ENCODE measurements at regions of chr22 and their contacts with region 1.

Region 1: DNA sequence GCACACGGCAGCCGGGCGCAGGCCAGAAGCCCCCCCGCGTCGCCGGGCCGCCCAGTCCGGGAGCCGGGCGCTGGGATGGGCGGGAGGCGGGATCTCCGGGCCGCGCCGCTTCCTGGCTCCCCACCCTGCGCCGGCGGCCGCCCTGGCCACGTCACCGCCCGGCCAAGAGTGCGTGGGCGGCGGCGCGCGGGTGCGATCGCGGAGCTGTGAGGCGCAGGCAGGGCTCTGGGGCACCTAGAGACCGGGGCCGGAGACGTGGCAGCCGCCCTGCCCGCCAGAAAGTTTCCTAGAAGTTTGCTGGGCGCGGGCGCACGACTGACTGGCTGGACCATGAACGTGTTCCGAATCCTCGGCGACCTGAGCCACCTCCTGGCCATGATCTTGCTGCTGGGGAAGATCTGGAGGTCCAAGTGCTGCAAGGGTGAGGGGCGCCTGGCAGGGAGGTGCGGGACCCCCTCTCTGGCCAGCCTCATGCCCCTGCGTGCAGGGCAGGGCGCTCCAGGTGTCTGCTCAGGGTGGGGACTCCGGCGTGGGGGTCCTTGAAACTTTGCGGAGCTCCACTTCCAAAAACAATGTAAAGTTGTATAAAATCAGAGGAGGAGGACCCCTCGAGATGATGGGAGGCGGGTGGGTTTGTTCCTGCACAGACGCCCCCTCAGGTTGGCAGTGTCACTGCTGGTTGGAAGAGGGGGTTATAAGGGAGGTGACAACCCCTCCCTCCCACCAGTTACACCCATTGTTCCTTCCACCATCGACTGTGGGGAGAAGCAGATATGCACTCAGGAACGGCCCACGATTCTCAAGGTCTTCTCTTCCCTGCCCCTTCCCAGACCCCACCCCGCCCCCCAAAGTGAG is at the start of gene KDELR3:
- DNase-seq: peak; percentile 78
- ATAC-seq: peak; percentile 94
- H3K4me3 Mint-ChIP-seq: peak within 1 kb of the TSS; percentile 69
- H3K27ac Mint-ChIP-seq: peak within 1 kb of the TSS; percentile 30
- H3K4me1 Mint-ChIP-seq: peaks cover 4% of the 10 kb centered on the region
- H3K27me3 Mint-ChIP-seq: peaks cover 27% of the 10 kb centered on the region
- CTCF ChIP-seq: peak; percentile 18
- total RNA-seq, gene KDELR3: 1.7 to 2.1 TPM

Region 2: GRCh38 chr22:38353142-38353629 is 114.9 kb before region 1 on chr22:
- CTCF ChIA-PET with region 1: no interaction called
- POLR2A ChIA-PET with region 1: no interaction called
- intact Hi-C with region 1: no loop called
- DNase-seq: peak; percentile 67
- ATAC-seq: peak; percentile 96
- H3K4me3 Mint-ChIP-seq: no peak overlapping the region
- H3K27ac Mint-ChIP-seq: no peak overlapping the region
- H3K4me1 Mint-ChIP-seq: no peaks in the 10 kb centered on the region
- H3K27me3 Mint-ChIP-seq: no peaks in the 10 kb centered on the region
- CTCF ChIP-seq: peak; percentile 98

Region 3: DNA sequence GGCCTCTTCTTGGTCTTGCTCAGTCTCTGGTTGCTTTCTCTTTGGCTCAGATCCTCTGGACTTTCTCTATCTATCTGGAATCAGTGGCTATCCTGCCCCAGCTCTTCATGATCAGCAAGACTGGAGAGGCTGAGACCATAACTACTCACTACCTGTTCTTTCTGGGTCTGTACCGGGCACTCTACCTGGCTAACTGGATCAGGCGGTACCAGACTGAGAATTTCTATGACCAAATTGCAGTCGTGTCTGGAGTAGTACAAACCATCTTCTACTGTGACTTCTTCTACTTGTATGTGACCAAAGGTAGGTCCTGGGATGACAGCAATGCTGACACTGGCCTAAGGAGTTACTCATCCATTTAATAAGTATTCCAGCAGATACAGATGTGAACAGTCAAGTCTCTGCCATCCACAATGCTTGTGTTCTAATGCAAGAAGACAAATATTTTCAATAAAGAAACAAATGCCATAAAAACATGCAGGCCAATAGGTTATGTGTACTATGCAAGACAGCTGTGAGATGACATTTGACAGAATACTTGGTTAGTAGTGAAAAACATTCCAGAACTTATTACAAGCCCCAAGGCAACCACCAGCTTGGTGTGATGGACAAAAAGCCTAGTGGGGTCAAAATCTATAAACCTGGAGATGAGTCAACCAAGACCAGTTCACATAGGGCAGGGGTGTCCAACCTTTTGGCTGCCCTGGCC is 13.2 kb after region 1 on chr22:
- CTCF ChIA-PET with region 1: interaction called, 3 read pairs
- POLR2A ChIA-PET with region 1: interaction called, 10 read pairs
- intact Hi-C with region 1: no loop called
- DNase-seq: no peak
- ATAC-seq: no peak
- H3K4me3 Mint-ChIP-seq: no peak overlapping the region
- H3K27ac Mint-ChIP-seq: peak overlapping the region; percentile 11
- H3K4me1 Mint-ChIP-seq: peaks cover 28% of the 10 kb centered on the region
- H3K27me3 Mint-ChIP-seq: no peaks in the 10 kb centered on the region
- CTCF ChIP-seq: no peak

Region 4: DNA sequence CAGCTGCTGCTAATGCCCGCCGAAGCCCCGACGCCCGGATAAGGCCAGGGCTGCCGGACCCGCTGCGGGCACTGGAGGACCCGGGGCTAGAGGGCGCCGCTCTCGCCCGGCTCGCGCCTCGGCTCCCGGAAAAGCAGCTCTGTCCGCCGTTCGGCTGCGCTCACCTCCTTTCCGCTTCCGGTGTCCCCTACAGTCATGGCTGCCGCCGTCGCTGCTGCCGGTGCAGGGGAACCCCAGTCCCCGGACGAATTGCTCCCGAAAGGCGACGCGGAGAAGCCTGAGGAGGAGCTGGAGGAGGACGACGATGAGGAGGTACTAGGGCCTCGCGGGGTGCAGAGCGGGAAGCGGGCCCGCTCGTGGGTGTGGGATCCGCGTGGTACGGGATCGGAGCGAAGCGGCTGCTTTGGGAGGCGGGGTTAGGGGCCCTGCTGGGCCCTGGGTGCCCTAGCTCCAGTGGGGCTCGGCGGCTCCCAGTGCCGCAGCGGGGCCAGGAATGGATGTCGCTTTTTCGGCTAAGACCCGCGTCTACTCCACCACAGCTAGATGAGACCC is 213.7 kb after region 1 on chr22 and contains the start of gene TOMM22:
- CTCF ChIA-PET with region 1: no interaction called
- POLR2A ChIA-PET with region 1: no interaction called
- intact Hi-C with region 1: no loop called
- DNase-seq: peak; percentile 89
- ATAC-seq: peak; percentile 98
- H3K4me3 Mint-ChIP-seq: peak within 1 kb of the TSS; percentile 97
- H3K27ac Mint-ChIP-seq: peak within 1 kb of the TSS; percentile 96
- H3K4me1 Mint-ChIP-seq: peaks cover 26% of the 10 kb centered on the region
- H3K27me3 Mint-ChIP-seq: no peaks in the 10 kb centered on the region
- CTCF ChIP-seq: no peak
- total RNA-seq, gene TOMM22: 155 to 158 TPM

Region 5: GRCh38 chr22:38788021-38788816 is 320.1 kb after region 1 on chr22:
- CTCF ChIA-PET with region 1: no interaction called
- POLR2A ChIA-PET with region 1: no interaction called
- intact Hi-C with region 1: no loop called
- DNase-seq: no peak
- ATAC-seq: no peak
- H3K4me3 Mint-ChIP-seq: no peak overlapping the region
- H3K27ac Mint-ChIP-seq: no peak overlapping the region
- H3K4me1 Mint-ChIP-seq: peaks cover 5% of the 10 kb centered on the region
- H3K27me3 Mint-ChIP-seq: no peaks in the 10 kb centered on the region
- CTCF ChIP-seq: no peak

Measured in activated CD8-positive, alpha-beta T cell treated with anti-CD3 and anti-CD28 coated beads for 36 hours (primary cell).